ENCODE measurements at regions of chr2 and their contacts with region 1.

Region 1: GRCh38 chr2:96760036-96760985 is at the start of gene CNNM4:
- DNase-seq: peak; percentile 87 to 94
- ATAC-seq: peak; percentile 94 to 98 (median 95)
- H3K4me3 ChIP-seq: peak within 1 kb of the TSS; percentile 79
- H3K4me3 Mint-ChIP-seq: peak within 1 kb of the TSS; percentile 86
- H3K27ac ChIP-seq: peak within 1 kb of the TSS; percentile 63
- H3K27ac Mint-ChIP-seq: peak within 1 kb of the TSS; percentile 65 to 82
- H3K4me1 ChIP-seq: peaks cover 49% of the 10 kb centered on the region
- H3K4me1 Mint-ChIP-seq: peaks cover 46 to 51% of the 10 kb centered on the region in 2 donors
- H3K27me3 ChIP-seq: no peaks in the 10 kb centered on the region
- H3K27me3 Mint-ChIP-seq: no peaks in the 10 kb centered on the region
- CTCF ChIP-seq: no peak
- total RNA-seq, gene CNNM4: 9.9 to 12.1 (median 10.7) TPM

Region 2: GRCh38 chr2:96618604-96619283 is 141.6 kb before region 1 on chr2:
- intact Hi-C with region 1: loop called (anchors 1 kb)
- DNase-seq: no peak
- ATAC-seq: peak in 1 of 3 donors; percentile 52
- H3K4me3 ChIP-seq: no peak overlapping the region
- H3K4me3 Mint-ChIP-seq: no peak overlapping the region
- H3K27ac ChIP-seq: no peak overlapping the region
- H3K27ac Mint-ChIP-seq: peak overlapping the region in 1 of 2 donors; percentile 58
- H3K4me1 ChIP-seq: peaks cover 18% of the 10 kb centered on the region
- H3K4me1 Mint-ChIP-seq: peaks cover 44 to 46% of the 10 kb centered on the region in 2 donors
- H3K27me3 ChIP-seq: no peaks in the 10 kb centered on the region
- H3K27me3 Mint-ChIP-seq: no peaks in the 10 kb centered on the region
- CTCF ChIP-seq: no peak

Region 3: GRCh38 chr2:96638144-96639121 is 121.9 kb before region 1 on chr2 and contains the start of gene KANSL3:
- intact Hi-C with region 1: loop called (anchors 2 kb)
- DNase-seq: peak; percentile 94 to 95
- ATAC-seq: peak; percentile 82 to 93 (median 87)
- H3K4me3 ChIP-seq: peak within 1 kb of the TSS; percentile 60
- H3K4me3 Mint-ChIP-seq: peak within 1 kb of the TSS; percentile 93
- H3K27ac ChIP-seq: peak within 1 kb of the TSS; percentile 89
- H3K27ac Mint-ChIP-seq: peak within 1 kb of the TSS; percentile 94 to 97
- H3K4me1 ChIP-seq: peaks cover 19% of the 10 kb centered on the region
- H3K4me1 Mint-ChIP-seq: peaks cover 33% of the 10 kb centered on the region in 2 donors
- H3K27me3 ChIP-seq: no peaks in the 10 kb centered on the region
- H3K27me3 Mint-ChIP-seq: peaks cover 0 to 3% of the 10 kb centered on the region in 2 donors
- CTCF ChIP-seq: no peak
- total RNA-seq, gene KANSL3: 73.9 to 98.0 (median 83.5) TPM

Region 4: GRCh38 chr2:96739633-96740428 is 20.5 kb before region 1 on chr2 and contains the start of gene LMAN2L:
- intact Hi-C with region 1: loop called (anchors 1 kb)
- DNase-seq: peak; percentile 93 to 97
- ATAC-seq: peak; percentile 99 to 100 (median 100)
- H3K4me3 ChIP-seq: peak within 1 kb of the TSS; percentile 73
- H3K4me3 Mint-ChIP-seq: peak within 1 kb of the TSS; percentile 98
- H3K27ac ChIP-seq: peak within 1 kb of the TSS; percentile 57
- H3K27ac Mint-ChIP-seq: peak within 1 kb of the TSS; percentile 83 to 93
- H3K4me1 ChIP-seq: peaks cover 15% of the 10 kb centered on the region
- H3K4me1 Mint-ChIP-seq: peaks cover 18 to 30% of the 10 kb centered on the region in 2 donors
- H3K27me3 ChIP-seq: no peaks in the 10 kb centered on the region
- H3K27me3 Mint-ChIP-seq: no peaks in the 10 kb centered on the region
- CTCF ChIP-seq: no peak
- total RNA-seq, gene LMAN2L: 4.0 to 7.9 (median 5.9) TPM

Region 5: GRCh38 chr2:96801005-96801785 is 40.9 kb after region 1 on chr2:
- intact Hi-C with region 1: loop called (anchors 5 kb)
- DNase-seq: peak; percentile 61 to 84
- ATAC-seq: peak; percentile 87 to 96 (median 96)
- H3K4me3 ChIP-seq: no peak overlapping the region
- H3K4me3 Mint-ChIP-seq: no peak overlapping the region
- H3K27ac ChIP-seq: no peak overlapping the region
- H3K27ac Mint-ChIP-seq: no peak overlapping the region
- H3K4me1 ChIP-seq: peaks cover 23% of the 10 kb centered on the region
- H3K4me1 Mint-ChIP-seq: peaks cover 2 to 6% of the 10 kb centered on the region in 2 donors
- H3K27me3 ChIP-seq: no peaks in the 10 kb centered on the region
- H3K27me3 Mint-ChIP-seq: no peaks in the 10 kb centered on the region
- CTCF ChIP-seq: peak; percentile 68